A673 (cell line): ENCODE measurements at regions of chr5 and their contacts with region 1.

Region 1: GRCh38 chr5:147188200-147189108 is 46.4 kb upstream of the STK32A start:
- DNase-seq: peak; percentile 76
- H3K4me3 ChIP-seq: no peak overlapping the region
- H3K27ac ChIP-seq: no peak overlapping the region
- H3K4me1 ChIP-seq: no peaks in the 10 kb centered on the region
- H3K27me3 ChIP-seq: peaks cover 24% of the 10 kb centered on the region
- CTCF ChIP-seq: peak; percentile 90

Region 2: GRCh38 chr5:146533260-146533857 is 655.1 kb before region 1 on chr5:
- CTCF ChIA-PET with region 1: interaction called, 8 read pairs
- POLR2A ChIA-PET with region 1: no interaction called
- intact Hi-C with region 1: loop called (anchors 2 kb)
- DNase-seq: peak; percentile 72
- H3K4me3 ChIP-seq: no peak overlapping the region
- H3K27ac ChIP-seq: no peak overlapping the region
- H3K4me1 ChIP-seq: no peaks in the 10 kb centered on the region
- H3K27me3 ChIP-seq: no peaks in the 10 kb centered on the region
- CTCF ChIP-seq: peak; percentile 93

Region 3: DNA sequence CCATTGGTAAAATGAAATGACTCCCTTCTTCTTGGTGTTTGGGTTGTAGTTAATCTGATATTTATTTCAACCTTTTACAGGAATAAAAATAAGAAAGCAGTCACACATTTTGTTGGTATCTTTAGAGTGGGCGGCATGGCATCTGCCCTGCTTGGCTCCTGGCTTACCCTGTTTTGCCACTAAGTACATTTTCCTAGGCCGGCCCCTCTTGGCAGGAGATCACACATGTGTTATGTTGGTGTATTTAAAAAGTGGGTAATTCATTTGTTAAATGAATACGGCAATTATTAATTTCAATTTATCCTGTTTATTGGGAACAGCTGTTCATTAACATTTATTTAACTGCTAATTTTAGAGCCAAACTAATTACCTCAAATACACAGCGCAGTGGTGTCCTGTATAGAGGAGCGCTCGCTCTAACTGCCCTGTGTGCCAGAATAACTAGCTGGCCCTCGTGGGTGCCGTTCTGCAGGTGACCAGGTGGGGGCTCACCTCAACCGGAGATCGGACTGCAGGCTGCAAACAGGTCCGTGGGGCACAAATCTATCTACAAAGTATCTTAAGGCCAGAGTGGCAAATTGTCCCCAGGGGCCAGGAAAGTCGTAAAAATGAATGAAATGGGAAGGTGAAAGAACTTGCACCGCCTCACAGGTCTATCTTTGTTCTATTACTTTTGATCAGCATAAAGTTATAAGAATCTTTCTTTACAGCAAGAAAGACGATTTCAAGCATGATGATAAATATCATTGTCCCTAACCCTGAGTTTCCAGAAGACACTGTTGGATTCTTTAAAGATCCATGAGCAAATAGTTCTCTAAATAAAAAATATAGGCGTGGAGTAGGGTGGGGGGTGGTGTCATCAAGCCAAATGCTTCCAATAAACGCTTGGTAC is 646.2 kb before region 1 on chr5:
- CTCF ChIA-PET with region 1: interaction called, 21 read pairs
- POLR2A ChIA-PET with region 1: no interaction called
- intact Hi-C with region 1: no loop called
- DNase-seq: peak; percentile 64
- H3K4me3 ChIP-seq: no peak overlapping the region
- H3K27ac ChIP-seq: no peak overlapping the region
- H3K4me1 ChIP-seq: no peaks in the 10 kb centered on the region
- H3K27me3 ChIP-seq: no peaks in the 10 kb centered on the region
- CTCF ChIP-seq: peak; percentile 80

Region 4: DNA sequence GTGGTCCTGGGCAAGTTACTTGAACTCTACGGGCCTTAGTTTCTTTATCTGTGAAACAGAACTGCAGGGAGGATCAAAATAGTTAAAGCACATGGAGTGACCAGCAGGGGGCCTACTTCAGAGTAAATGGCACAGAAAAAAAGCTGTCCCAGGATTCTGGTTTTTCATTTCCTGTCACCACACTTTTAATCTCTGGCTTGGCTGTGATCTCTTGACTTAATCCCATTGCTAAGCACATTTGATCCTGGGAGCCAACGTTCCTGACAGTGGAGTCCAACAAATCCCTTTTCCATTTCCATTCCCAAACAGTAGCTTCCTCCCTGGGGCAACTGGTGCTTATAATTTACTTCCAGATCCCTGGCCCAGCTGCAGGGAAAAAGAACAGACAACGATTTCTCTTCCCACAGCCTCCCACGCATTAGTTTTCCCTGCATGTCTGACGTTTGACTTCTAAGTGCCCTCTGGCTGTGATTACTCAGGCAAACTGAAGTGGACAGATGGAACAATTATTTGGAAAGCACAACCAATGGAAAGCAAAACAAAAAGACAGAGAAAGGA is 90.1 kb before region 1 on chr5:
- CTCF ChIA-PET with region 1: interaction called, 30 read pairs
- POLR2A ChIA-PET with region 1: no interaction called
- intact Hi-C with region 1: loop called (anchors 2 kb)
- DNase-seq: peak; percentile 71
- H3K4me3 ChIP-seq: no peak overlapping the region
- H3K27ac ChIP-seq: no peak overlapping the region
- H3K4me1 ChIP-seq: peaks cover 4% of the 10 kb centered on the region
- H3K27me3 ChIP-seq: peaks cover 8% of the 10 kb centered on the region
- CTCF ChIP-seq: peak; percentile 70